ENCODE measurements at regions of chr22 and their contacts with region 1.

Region 1: DNA sequence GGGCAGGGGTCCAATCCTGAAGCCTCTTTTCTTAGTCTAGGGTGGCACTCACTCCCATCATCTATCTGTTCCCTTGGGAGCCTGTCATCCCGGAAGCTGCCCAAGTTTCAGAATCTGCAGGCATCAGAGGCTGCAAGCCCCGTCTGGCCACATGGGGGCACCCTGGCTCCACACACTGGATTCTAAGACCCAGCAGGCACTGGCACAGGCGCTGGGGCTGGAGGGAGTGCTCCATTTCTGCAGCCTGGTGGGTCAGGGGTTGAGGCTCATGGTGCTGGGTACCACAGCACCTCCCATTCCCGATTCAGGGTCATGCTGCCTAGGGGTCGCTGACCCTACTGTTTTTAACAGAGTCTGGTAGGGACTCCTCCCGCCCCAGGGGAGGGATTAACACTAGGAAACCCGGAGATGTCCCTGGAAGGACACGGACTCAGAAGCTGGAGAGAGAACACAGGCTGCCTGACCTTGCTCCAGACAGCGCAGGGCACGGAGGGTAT is 243.9 kb upstream of the SYN3 start:
- DNase-seq: peak; percentile 81 to 91 (median 87)
- H3K4me3 ChIP-seq: no peak overlapping the region
- H3K27ac ChIP-seq: no peak overlapping the region
- H3K4me1 ChIP-seq: peaks cover 6% of the 10 kb centered on the region
- H3K27me3 ChIP-seq: no peaks in the 10 kb centered on the region
- CTCF ChIP-seq: peak; percentile 84 to 92 (median 89)
- EP300 ChIP-seq: no peak
- POLR2A ChIP-seq: no peak

Region 2: GRCh38 chr22:33579448-33580093 is 277.5 kb after region 1 on chr22:
- intact Hi-C with region 1: loop called in 1 of 4 experiments (anchors 10 kb)
- DNase-seq: peak in 3 of 5 donors; percentile 18 to 35 (median 33)
- H3K4me3 ChIP-seq: no peak overlapping the region
- H3K27ac ChIP-seq: no peak overlapping the region
- H3K4me1 ChIP-seq: peaks cover 2% of the 10 kb centered on the region
- H3K27me3 ChIP-seq: no peaks in the 10 kb centered on the region
- CTCF ChIP-seq: peak in 2 of 3 donors; percentile 33 to 36
- EP300 ChIP-seq: no peak
- POLR2A ChIP-seq: no peak

Region 3: DNA sequence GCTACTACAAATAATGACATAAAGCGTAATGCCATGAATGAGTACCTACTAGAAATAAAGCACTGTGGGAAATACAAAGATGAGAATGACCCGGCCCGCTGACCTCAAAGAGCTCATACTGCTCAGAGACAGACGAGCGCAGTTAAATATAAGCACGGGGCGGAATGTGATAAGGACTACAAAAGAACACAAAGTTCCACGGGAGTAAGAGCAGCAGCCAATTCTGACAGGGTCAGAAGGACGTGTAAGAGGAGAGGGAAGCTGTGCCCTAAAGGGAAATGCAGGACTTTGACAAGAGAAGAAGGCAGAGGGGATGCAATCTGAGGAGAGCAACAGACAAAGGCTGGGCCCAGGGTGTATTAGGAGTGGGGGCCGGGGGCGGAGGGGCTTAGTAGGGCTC is 303.6 kb after region 1 on chr22:
- intact Hi-C with region 1: no loop called
- DNase-seq: peak in 2 of 5 donors; percentile 32 to 58
- H3K4me3 ChIP-seq: no peak overlapping the region
- H3K27ac ChIP-seq: no peak overlapping the region
- H3K4me1 ChIP-seq: no peaks in the 10 kb centered on the region
- H3K27me3 ChIP-seq: no peaks in the 10 kb centered on the region
- CTCF ChIP-seq: no peak
- EP300 ChIP-seq: no peak
- POLR2A ChIP-seq: no peak

Region 4: DNA sequence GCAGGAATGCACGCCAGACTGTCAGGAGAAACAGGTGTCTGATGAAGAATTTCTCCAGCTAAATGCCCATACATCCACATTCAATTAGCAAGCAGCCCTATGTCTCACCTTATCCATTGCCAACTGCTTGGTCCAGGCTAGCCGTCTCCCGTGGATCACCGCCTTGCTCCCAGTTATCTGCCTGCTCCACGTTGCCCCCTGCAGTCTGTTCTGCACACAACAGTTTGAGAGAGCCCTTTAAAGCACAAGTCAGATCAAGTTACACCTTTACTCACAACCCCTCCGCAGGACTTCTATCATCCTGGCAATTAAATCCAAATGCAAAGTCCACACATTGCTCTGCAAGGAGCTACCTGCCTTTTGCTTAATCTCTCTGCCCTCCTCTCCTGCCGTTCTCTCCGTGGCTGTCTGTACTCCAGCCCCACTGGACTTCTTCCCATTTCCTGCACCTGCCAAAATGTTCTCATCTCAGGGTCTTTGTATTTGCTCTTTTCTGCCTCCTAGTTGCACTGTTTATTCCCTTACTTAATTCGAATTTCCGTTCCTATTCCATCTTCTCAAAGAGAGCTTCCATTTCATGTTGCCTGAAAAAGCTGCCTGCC is 803.5 kb after region 1 on chr22:
- intact Hi-C with region 1: loop called in 2 of 4 experiments (anchors 5 to 10 kb)
- DNase-seq: peak; percentile 9 to 57 (median 44)
- H3K4me3 ChIP-seq: no peak overlapping the region
- H3K27ac ChIP-seq: no peak overlapping the region
- H3K4me1 ChIP-seq: no peaks in the 10 kb centered on the region
- H3K27me3 ChIP-seq: no peaks in the 10 kb centered on the region
- CTCF ChIP-seq: peak in 1 of 3 donors; percentile 16
- EP300 ChIP-seq: no peak
- POLR2A ChIP-seq: no peak

Region 5: GRCh38 chr22:34111210-34111824 is 809.2 kb after region 1 on chr22:
- intact Hi-C with region 1: loop called in 3 of 4 experiments (anchors 5 to 10 kb)
- DNase-seq: peak; percentile 13 to 39 (median 27)
- H3K4me3 ChIP-seq: no peak overlapping the region
- H3K27ac ChIP-seq: no peak overlapping the region
- H3K4me1 ChIP-seq: no peaks in the 10 kb centered on the region
- H3K27me3 ChIP-seq: no peaks in the 10 kb centered on the region
- CTCF ChIP-seq: peak in 2 of 3 donors; percentile 22 to 34
- EP300 ChIP-seq: no peak
- POLR2A ChIP-seq: no peak

Region 6: GRCh38 chr22:35150183-35151107 is 1848.3 kb after region 1 on chr22:
- intact Hi-C with region 1: loop called in 1 of 4 experiments (anchors 10 kb)
- DNase-seq: peak; percentile 14 to 54 (median 45)
- H3K4me3 ChIP-seq: no peak overlapping the region
- H3K27ac ChIP-seq: no peak overlapping the region
- H3K4me1 ChIP-seq: no peaks in the 10 kb centered on the region
- H3K27me3 ChIP-seq: no peaks in the 10 kb centered on the region
- CTCF ChIP-seq: no peak
- EP300 ChIP-seq: no peak
- POLR2A ChIP-seq: no peak

Measured in ovary (tissue), 10 donors.